Sciatic nerve (tissue), 2 donors: ENCODE measurements at regions of chr15 and their contacts with region 1.

Region 1: GRCh38 chr15:99282121-99282520 is 30.8 kb downstream of the LRRC28 start:
- DNase-seq: no peak
- ATAC-seq: no peak

Region 2: DNA sequence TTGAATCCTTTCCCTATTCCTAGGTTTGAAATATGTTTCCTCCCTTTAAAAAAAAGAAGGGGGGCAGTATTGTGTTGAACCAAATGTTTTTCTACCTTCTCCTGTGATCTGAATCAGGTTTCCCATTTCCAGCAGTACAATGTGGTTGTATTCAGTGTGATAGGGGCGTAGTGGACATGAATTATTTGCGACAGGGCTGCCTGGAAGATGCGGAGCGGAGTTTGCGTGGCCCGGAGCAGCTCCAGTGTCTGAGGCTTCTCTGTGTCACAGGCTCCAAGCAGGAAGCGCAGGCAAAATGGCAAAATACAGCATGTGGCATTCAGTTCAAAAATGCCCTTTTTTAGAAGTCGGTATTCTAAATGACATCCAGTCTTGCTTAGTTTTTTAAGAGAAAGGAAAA is 429.0 kb before region 1 on chr15:
- intact Hi-C with region 1: no loop called
- DNase-seq: peak; percentile 91
- ATAC-seq: peak; percentile 92

Region 3: DNA sequence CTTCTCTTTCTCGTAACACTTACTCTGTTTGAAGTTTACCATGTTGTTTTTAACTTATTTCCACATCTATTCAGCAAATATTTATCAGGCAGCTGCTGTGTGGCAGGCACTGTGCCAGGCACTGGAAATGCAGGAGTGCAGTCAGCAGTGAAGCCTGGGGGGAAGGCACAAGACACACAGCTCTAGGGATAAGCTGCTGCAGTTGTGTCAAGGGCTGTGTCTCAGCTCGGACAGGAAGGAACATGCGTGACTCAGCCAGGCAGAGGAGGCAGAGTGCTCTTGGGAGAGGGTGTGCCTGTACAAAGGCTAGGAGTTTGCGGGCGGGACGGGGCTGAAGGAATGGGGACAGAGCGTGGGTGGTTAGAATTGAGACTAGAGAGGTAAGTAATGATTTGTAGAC is 426.4 kb after region 1 on chr15:
- intact Hi-C with region 1: loop called (anchors 5 kb)
- DNase-seq: peak; percentile 69
- ATAC-seq: peak; percentile 85